Breast epithelium (tissue), 4 donors: ENCODE measurements at regions of chr14 and their contacts with region 1.

Region 1: GRCh38 chr14:92520092-92520745 is 6.6 kb downstream of the RIN3 start:
- DNase-seq: no peak
- H3K4me3 ChIP-seq: no peak overlapping the region
- H3K27ac ChIP-seq: no peak overlapping the region
- H3K4me1 ChIP-seq: no peaks in the 10 kb centered on the region
- H3K27me3 ChIP-seq: no peaks in the 10 kb centered on the region
- CTCF ChIP-seq: no peak
- POLR2A ChIP-seq: no peak

Region 2: GRCh38 chr14:92471919-92472318 is 48.3 kb before region 1 on chr14:
- intact Hi-C with region 1: loop called (anchors 10 kb)
- DNase-seq: no peak
- H3K4me3 ChIP-seq: no peak overlapping the region
- H3K27ac ChIP-seq: no peak overlapping the region
- H3K4me1 ChIP-seq: peaks cover 0 to 9% of the 10 kb centered on the region in 2 donors
- H3K27me3 ChIP-seq: no peaks in the 10 kb centered on the region
- CTCF ChIP-seq: no peak
- POLR2A ChIP-seq: no peak

Region 3: GRCh38 chr14:92686900-92687444 is 166.8 kb after region 1 on chr14:
- intact Hi-C with region 1: no loop called
- DNase-seq: peak; percentile 51 to 67
- H3K4me3 ChIP-seq: peak overlapping the region; percentile 19 to 57 (median 37)
- H3K27ac ChIP-seq: no peak overlapping the region
- H3K4me1 ChIP-seq: no peaks in the 10 kb centered on the region
- H3K27me3 ChIP-seq: no peaks in the 10 kb centered on the region
- CTCF ChIP-seq: peak; percentile 80 to 93 (median 93)
- POLR2A ChIP-seq: no peak